Prostate gland (tissue), 2 donors: ENCODE measurements at regions of chr20 and their contacts with region 1.

Region 1: DNA sequence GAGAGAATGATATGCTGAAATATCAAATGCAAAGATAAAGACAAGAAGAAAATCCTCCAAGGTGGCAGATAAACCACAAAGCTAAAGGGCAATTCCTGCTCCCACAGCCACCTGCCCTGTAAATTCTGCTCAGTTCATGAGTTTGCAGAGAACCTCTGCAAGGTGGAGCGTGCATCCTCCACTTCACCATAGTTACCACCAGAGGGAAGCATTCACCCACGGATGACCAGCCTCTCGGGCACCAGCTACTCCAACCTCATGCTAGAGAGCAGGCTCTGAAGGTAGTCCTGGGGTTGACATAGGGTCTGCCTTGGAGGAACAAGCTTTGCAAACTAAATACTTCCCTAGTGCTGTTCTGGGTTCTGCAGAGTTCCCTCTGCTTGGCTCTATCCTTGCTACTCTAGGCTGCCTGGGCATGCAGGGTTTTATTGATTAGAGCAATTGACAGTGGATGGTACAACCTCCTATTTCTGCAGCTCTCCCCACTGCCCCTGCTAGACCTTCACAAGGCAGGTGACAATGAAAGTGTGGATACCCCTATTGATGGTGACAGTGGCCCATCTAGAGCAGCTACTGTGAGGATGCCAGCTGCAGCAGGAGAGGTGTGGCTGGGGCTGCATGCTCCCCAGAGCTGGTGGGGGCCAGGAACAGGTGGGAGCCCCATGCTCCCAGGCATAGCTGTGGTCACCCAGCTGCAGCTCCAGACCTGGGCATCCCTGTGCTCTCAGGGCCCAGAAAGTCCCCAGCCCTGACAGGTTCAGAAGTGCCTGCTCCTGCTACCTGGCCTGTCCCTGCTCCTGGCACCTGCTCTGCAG is 51.1 kb downstream of the GGTLC1 start:
- DNase-seq: peak; percentile 69
- H3K4me3 ChIP-seq: no peak overlapping the region
- H3K27ac ChIP-seq: no peak overlapping the region
- H3K4me1 ChIP-seq: no peaks in the 10 kb centered on the region
- H3K27me3 ChIP-seq: no peaks in the 10 kb centered on the region
- CTCF ChIP-seq: peak; percentile 44 to 89 (median 88)
- POLR2A ChIP-seq: no peak

Region 2: DNA sequence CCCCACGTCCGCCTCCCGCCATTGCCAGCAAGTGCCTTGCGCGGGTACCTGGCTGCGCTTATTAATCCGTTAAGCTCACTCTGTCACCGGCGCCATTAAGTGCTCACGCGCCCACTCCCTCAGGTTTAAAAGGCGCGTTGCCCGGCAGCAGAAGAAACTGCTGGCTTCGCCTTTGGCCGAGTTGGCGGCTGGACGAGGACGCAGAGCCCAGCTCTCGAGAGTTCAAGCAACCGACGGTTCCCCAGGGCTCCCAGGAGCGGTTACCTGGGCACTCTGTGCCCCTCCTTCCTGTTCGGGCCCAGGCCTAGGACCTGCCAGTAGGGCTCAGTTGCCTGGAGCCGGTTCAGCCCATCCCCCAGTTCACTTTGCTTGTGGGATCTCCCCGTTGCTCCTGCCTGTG is 51.1 kb after region 1 on chr20 and contains the start of gene GGTLC1:
- intact Hi-C with region 1: loop called (anchors 5 kb)
- DNase-seq: no peak
- H3K4me3 ChIP-seq: no peak within 1 kb of the TSS
- H3K27ac ChIP-seq: no peak within 1 kb of the TSS
- H3K4me1 ChIP-seq: no peaks in the 10 kb centered on the region
- H3K27me3 ChIP-seq: no peaks in the 10 kb centered on the region
- CTCF ChIP-seq: no peak
- POLR2A ChIP-seq: no peak
- total RNA-seq, gene GGTLC1: not detected

Region 3: DNA sequence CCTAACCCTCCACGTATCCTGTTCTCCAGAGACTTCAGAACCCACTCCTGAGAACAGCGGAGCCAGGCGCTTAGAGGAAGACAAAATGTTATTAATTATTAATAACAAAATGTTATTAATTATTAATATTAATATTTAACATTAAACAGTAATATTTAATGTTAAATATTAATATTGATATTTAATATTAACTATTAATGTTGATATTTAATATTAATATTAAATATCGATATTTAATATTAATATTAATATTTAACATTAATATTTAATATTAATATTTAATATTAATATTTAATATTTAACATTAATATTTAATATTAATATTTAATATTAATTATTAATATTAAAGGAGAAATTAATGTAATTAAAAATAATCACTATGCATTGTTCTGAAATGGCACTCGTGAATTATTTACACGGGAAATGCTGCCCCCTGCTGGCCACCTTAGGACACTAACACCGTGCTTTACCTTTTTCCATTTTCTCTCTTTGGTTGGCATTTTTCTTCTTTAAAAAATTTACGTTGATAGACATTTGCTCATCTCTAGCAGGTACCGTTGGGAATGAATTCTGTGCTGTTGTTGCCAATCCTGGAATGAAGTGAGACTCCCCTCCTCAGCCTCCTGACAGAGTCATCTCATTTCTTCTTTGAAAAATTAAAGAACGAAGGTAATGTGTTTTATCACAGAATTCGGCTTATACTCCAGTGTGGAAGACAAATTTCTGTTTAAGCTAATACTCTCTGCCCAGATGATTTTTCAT is 58.6 kb after region 1 on chr20:
- intact Hi-C with region 1: loop called (anchors 5 kb)
- DNase-seq: peak; percentile 43
- H3K4me3 ChIP-seq: no peak overlapping the region
- H3K27ac ChIP-seq: no peak overlapping the region
- H3K4me1 ChIP-seq: no peaks in the 10 kb centered on the region
- H3K27me3 ChIP-seq: no peaks in the 10 kb centered on the region
- CTCF ChIP-seq: peak; percentile 63 to 85 (median 72)
- POLR2A ChIP-seq: no peak

Region 4: GRCh38 chr20:24389686-24390085 is 452.2 kb after region 1 on chr20:
- intact Hi-C with region 1: no loop called
- DNase-seq: no peak
- H3K4me3 ChIP-seq: no peak overlapping the region
- H3K27ac ChIP-seq: no peak overlapping the region
- H3K4me1 ChIP-seq: no peaks in the 10 kb centered on the region
- H3K27me3 ChIP-seq: no peaks in the 10 kb centered on the region
- CTCF ChIP-seq: no peak
- POLR2A ChIP-seq: no peak